ENCODE measurements at regions of chr16 and their contacts with region 1.

Region 1: DNA sequence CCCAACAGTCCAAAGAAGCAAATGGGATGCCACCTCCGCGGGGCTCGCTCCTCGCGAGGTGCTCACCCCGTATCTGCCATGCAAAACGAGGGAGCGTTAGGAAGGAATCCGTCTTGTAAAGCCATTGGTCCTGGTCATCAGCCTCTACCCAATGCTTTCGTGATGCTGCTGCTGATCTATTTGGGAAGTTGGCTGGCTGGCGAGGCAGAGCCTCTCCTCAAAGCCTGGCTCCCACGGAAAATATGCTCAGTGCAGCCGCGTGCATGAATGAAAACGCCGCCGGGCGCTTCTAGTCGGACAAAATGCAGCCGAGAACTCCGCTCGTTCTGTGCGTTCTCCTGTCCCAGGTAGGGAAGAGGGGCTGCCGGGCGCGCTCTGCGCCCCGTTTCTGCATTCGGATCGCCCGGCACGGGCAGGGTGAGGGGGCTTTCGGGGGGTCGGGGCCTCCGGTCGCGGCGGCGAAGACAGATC is at the start of gene CDH13:
- DNase-seq: peak; percentile 77
- ATAC-seq: peak; percentile 40
- H3K4me3 ChIP-seq: peak within 1 kb of the TSS; percentile 60
- H3K27ac ChIP-seq: peak within 1 kb of the TSS; percentile 46
- H3K4me1 ChIP-seq: peaks cover 18% of the 10 kb centered on the region
- H3K27me3 ChIP-seq: peaks cover 21% of the 10 kb centered on the region
- CTCF ChIP-seq: no peak
- POLR2A ChIP-seq: peak; percentile 66; the same call in 1 of the 2 replicates
- RAD21 ChIP-seq: no peak
- total RNA-seq, gene CDH13: 45.8 and 74.7 TPM in 2 replicates

Region 2: DNA sequence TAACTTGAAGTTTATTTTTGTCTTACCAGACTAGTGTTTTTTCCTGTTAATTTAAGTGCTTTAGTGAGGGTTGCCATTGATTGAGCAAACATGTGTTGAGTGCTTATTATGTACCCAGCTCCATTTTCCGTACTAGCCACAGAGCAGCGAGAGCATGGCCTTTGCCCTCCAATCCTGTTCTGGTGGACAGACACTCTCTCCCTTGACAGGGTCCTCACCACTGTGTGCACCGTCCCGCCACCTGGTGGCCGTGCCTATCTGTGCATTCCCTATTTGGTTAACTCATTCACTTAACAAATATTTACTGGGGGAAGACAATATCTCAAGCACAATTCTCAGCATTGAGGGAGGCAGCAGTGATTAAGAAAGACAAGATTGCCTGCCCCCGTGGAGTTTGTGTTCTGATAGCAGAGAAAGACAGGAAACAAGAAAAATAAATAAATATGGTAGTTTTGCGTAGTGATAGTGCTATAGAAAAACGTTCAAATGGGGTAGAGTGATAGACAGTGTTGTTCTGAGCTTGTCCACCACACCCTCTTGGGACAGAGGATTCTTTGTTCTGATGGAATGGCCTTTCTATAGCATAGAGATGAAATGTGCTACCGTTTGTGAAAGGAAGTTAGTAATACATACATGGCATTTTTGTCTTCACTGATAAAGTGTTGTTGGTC is 13.0 kb after region 1 on chr16:
- CTCF ChIA-PET with region 1: interaction called, 12 read pairs
- POLR2A ChIA-PET with region 1: no interaction called
- dilution Hi-C with region 1: no loop called
- in situ Hi-C with region 1: no loop called
- intact Hi-C with region 1: no loop called
- DNase-seq: peak; percentile 58
- ATAC-seq: peak; percentile 74
- H3K4me3 ChIP-seq: no peak overlapping the region
- H3K27ac ChIP-seq: no peak overlapping the region
- H3K4me1 ChIP-seq: peaks cover 17% of the 10 kb centered on the region
- H3K27me3 ChIP-seq: no peaks in the 10 kb centered on the region
- CTCF ChIP-seq: peak; percentile 74
- POLR2A ChIP-seq: no peak
- RAD21 ChIP-seq: peak; percentile 62

Region 3: DNA sequence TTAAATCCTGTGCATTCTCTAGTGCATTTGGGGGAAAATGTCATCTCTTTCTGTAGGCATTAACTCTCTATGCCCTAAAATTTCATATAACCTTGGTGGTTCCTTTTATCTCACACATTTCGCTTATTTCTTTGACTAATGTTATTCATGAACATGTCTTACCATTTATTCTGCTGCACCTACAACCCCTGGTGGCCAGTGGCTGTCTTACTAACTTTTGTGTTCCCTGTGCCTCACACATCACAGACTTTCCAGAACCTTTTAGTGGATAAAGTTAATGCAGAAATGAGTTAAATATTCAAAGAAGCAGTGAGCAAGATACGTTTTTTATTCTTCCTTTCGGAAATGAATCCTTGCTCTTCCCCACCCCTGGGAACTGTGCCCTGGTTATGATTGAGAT is 111.9 kb after region 1 on chr16:
- CTCF ChIA-PET with region 1: no interaction called
- POLR2A ChIA-PET with region 1: no interaction called
- dilution Hi-C with region 1: no loop called
- in situ Hi-C with region 1: no loop called
- intact Hi-C with region 1: loop called (anchors 5 kb)
- DNase-seq: peak; percentile 23
- ATAC-seq: no peak
- H3K4me3 ChIP-seq: no peak overlapping the region
- H3K27ac ChIP-seq: no peak overlapping the region
- H3K4me1 ChIP-seq: no peaks in the 10 kb centered on the region
- H3K27me3 ChIP-seq: no peaks in the 10 kb centered on the region
- CTCF ChIP-seq: peak; percentile 35
- POLR2A ChIP-seq: no peak
- RAD21 ChIP-seq: peak; percentile 40

Region 4: DNA sequence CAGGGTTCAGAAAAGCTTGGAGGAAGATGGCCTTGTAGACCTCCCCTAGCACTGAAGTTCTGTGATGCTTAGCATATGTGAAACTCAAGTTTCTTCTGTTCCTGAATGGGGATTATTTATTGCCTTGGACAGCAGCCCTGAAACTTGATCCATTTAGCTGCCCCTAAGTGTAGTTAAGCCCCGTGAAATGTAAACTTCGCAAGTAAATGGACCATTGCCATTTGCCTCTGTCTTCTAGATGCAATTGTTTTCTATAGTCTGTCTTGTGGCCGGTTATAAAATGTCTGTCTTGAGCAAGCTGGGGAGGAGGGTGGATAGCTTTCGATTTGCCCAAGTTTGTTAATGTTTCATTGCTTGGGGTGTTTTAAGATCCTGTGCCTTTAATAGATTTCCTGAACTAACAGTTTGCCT is 261.8 kb after region 1 on chr16:
- CTCF ChIA-PET with region 1: no interaction called
- POLR2A ChIA-PET with region 1: no interaction called
- dilution Hi-C with region 1: no loop called
- in situ Hi-C with region 1: no loop called
- intact Hi-C with region 1: loop called (anchors 5 kb)
- DNase-seq: peak; percentile 95
- ATAC-seq: peak; percentile 92
- H3K4me3 ChIP-seq: peak overlapping the region; percentile 9; the same call in 1 of the 2 replicates
- H3K27ac ChIP-seq: peak overlapping the region; percentile 59; the same call in 1 of the 2 replicates
- H3K4me1 ChIP-seq: peaks cover 7% of the 10 kb centered on the region
- H3K27me3 ChIP-seq: no peaks in the 10 kb centered on the region
- CTCF ChIP-seq: no peak
- POLR2A ChIP-seq: no peak
- RAD21 ChIP-seq: no peak

Region 5: GRCh38 chr16:83005653-83006160 is 378.9 kb after region 1 on chr16:
- CTCF ChIA-PET with region 1: no interaction called
- POLR2A ChIA-PET with region 1: no interaction called
- dilution Hi-C with region 1: no loop called
- in situ Hi-C with region 1: no loop called
- intact Hi-C with region 1: no loop called
- DNase-seq: peak; percentile 47
- ATAC-seq: peak; percentile 42
- H3K4me3 ChIP-seq: no peak overlapping the region
- H3K27ac ChIP-seq: no peak overlapping the region
- H3K4me1 ChIP-seq: peaks cover 21% of the 10 kb centered on the region
- H3K27me3 ChIP-seq: no peaks in the 10 kb centered on the region
- CTCF ChIP-seq: no peak
- POLR2A ChIP-seq: no peak
- RAD21 ChIP-seq: no peak

Region 6: DNA sequence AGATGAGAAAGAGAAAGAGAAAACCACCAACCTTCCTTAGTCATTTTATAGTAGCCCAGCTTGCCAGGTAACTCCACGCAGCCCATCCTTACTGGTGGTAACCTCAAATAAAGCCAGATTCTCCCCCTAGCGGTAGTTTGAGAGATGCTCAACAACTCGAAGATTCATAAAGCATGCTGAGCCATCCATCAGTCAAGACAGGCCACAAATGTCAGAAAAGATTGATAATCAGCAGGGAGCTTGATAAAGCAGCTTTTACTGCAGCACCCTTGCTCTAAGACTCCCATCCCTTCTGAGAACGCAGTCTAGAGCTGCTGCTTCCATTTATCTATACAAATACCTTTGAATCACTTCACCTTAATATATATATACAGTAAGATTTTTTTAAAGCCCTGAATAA is 729.4 kb after region 1 on chr16:
- CTCF ChIA-PET with region 1: interaction called, 6 read pairs
- POLR2A ChIA-PET with region 1: no interaction called
- dilution Hi-C with region 1: no loop called
- in situ Hi-C with region 1: no loop called
- intact Hi-C with region 1: loop called (anchors 10 kb)
- DNase-seq: peak; percentile 65
- ATAC-seq: peak; percentile 81
- H3K4me3 ChIP-seq: no peak overlapping the region
- H3K27ac ChIP-seq: no peak overlapping the region
- H3K4me1 ChIP-seq: no peaks in the 10 kb centered on the region
- H3K27me3 ChIP-seq: no peaks in the 10 kb centered on the region
- CTCF ChIP-seq: peak; percentile 62
- POLR2A ChIP-seq: no peak
- RAD21 ChIP-seq: peak; percentile 67

Measured in IMR-90 (cell line).